ENCODE measurements at regions of chr1 and their contacts with region 1.

Region 1: GRCh38 chr1:94926915-94927404 is at the start of gene CNN3:
- DNase-seq: peak; percentile 94
- H3K4me3 ChIP-seq: peak within 1 kb of the TSS; percentile 66 to 85
- H3K27ac ChIP-seq: peak within 1 kb of the TSS; percentile 97 to 98
- H3K4me1 ChIP-seq: peaks cover 17% of the 10 kb centered on the region
- H3K27me3 ChIP-seq: no peaks in the 10 kb centered on the region
- CTCF ChIP-seq: peak in 2 of 4 experiments; percentile 35 to 43
- POLR2A ChIP-seq: peak; percentile 100
- total RNA-seq, gene CNN3: 136 to 180 TPM

Region 2: DNA sequence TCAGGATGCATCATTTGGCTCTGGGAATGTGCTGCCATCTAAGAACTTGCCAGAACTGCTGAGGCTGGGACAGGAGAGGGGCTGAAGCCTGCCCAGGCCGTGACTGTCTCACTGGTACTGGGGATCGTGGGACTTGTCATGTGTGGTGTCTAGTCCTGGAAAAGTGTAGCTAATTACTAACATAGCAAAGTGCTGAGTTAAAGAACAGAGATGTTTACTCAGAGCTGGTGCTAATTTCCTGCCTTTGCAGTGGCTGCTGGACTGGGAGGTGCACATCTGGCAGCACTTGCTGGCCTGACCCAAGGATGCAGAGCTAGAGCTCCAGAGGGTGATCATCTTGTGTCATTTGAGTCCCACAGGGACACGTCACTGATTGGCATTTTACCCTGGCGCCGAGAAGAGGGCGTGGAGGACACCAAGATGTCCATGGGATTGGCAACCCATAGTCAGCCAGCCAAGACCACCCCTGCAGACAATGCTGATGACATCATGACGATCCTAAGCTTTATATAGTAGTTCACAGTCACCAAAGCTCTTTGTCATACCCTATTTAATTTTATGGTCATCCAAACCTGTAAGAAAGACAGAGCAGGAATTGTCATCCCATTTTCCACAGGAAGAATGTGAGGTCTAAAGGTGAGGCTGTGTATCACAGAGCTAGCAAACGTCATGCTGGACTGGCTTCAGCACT is 216.9 kb before region 1 on chr1:
- intact Hi-C with region 1: no loop called
- DNase-seq: no peak
- H3K4me3 ChIP-seq: no peak overlapping the region
- H3K27ac ChIP-seq: no peak overlapping the region
- H3K4me1 ChIP-seq: peaks cover 14% of the 10 kb centered on the region
- H3K27me3 ChIP-seq: no peaks in the 10 kb centered on the region
- CTCF ChIP-seq: no peak
- POLR2A ChIP-seq: no peak

Region 3: DNA sequence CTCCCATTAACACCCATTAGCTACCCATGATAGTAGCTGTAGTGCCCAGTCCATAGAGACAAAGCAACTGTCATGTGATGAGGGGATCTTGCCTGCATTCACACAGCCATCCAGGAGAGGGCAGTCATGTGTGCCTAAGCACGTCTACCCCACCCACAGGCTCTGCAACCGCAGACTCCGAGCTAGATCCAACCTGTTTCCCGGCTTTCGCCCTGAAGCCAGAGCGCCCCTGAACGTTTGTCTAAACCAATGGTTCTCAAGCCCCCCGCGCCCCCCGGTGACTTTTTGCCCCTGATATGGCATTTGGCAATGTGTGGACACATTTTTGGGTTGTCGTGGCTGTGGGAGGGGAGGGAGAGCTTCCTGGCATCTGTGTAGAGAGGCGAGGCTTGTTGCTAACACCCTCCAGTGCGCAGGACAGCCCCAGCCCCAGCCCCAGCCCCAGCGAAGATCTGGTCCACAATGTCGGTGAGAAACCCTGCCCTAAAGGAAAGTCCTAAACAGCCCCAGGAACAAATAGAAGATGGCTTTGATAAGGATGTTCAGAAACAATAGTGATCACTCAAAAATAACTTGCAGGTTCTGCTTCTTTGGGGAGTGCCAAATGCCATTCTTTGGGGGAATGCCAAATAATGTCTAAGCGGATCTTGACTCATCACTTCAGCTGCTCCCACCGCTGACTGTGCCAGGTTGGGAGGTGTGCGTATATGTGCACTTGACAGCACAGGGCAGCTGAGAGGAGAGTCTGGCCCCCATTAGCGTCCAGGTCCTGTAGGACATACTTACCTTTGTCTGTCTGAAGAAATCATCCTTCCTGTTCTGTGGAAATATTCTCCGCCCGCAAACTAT is 72.3 kb before region 1 on chr1:
- intact Hi-C with region 1: loop called (anchors 1 kb)
- DNase-seq: peak; percentile 91
- H3K4me3 ChIP-seq: peak overlapping the region; percentile 25 to 36
- H3K27ac ChIP-seq: peak overlapping the region; percentile 81 to 88
- H3K4me1 ChIP-seq: no peaks in the 10 kb centered on the region
- H3K27me3 ChIP-seq: no peaks in the 10 kb centered on the region
- CTCF ChIP-seq: peak; percentile 83 to 98 (median 97)
- POLR2A ChIP-seq: no peak

Region 4: GRCh38 chr1:94863919-94864318 is 63.0 kb before region 1 on chr1:
- intact Hi-C with region 1: loop called (anchors 2 kb)
- DNase-seq: peak; percentile 81
- H3K4me3 ChIP-seq: no peak overlapping the region
- H3K27ac ChIP-seq: peak overlapping the region; percentile 87 to 91
- H3K4me1 ChIP-seq: no peaks in the 10 kb centered on the region
- H3K27me3 ChIP-seq: no peaks in the 10 kb centered on the region
- CTCF ChIP-seq: no peak
- POLR2A ChIP-seq: peak; percentile 40

Region 5: GRCh38 chr1:94971491-94971924 is 44.5 kb after region 1 on chr1:
- intact Hi-C with region 1: loop called (anchors 5 kb)
- DNase-seq: no peak
- H3K4me3 ChIP-seq: no peak overlapping the region
- H3K27ac ChIP-seq: peak overlapping the region; percentile 24 to 31
- H3K4me1 ChIP-seq: no peaks in the 10 kb centered on the region
- H3K27me3 ChIP-seq: no peaks in the 10 kb centered on the region
- CTCF ChIP-seq: no peak
- POLR2A ChIP-seq: no peak

Region 6: DNA sequence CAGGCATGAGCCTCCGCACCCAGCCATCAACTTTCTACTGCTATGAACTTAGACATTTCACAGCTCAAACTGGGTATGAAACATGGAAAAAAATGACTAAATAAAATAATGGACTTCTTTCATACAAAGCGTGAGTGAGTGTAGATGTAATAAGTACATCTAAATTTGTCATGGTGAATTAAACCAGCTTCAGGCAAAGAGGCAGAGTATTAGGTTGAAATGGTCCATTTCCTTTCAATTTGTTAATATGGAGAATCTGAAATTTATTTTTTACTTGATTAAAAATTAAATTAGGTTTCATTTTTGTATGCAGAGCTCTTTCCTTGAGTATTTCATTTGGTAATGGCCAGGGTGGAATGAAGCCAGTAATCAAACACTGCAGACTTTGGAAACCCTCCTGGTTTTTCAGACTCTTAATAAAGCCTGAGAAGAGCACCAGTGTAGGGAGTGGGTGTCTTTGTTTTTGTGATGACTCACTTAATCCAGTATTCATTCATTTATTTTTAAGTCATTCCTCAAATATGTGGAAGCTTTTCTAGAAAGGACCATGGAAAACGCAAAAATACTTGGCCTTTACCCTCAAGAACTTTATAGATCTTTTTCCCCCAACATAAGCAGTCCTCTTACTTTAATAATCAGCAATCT is 96.6 kb after region 1 on chr1:
- intact Hi-C with region 1: loop called (anchors 5 kb)
- DNase-seq: no peak
- H3K4me3 ChIP-seq: no peak overlapping the region
- H3K27ac ChIP-seq: peak overlapping the region; percentile 16 to 60
- H3K4me1 ChIP-seq: no peaks in the 10 kb centered on the region
- H3K27me3 ChIP-seq: no peaks in the 10 kb centered on the region
- CTCF ChIP-seq: no peak
- POLR2A ChIP-seq: no peak

Region 7: DNA sequence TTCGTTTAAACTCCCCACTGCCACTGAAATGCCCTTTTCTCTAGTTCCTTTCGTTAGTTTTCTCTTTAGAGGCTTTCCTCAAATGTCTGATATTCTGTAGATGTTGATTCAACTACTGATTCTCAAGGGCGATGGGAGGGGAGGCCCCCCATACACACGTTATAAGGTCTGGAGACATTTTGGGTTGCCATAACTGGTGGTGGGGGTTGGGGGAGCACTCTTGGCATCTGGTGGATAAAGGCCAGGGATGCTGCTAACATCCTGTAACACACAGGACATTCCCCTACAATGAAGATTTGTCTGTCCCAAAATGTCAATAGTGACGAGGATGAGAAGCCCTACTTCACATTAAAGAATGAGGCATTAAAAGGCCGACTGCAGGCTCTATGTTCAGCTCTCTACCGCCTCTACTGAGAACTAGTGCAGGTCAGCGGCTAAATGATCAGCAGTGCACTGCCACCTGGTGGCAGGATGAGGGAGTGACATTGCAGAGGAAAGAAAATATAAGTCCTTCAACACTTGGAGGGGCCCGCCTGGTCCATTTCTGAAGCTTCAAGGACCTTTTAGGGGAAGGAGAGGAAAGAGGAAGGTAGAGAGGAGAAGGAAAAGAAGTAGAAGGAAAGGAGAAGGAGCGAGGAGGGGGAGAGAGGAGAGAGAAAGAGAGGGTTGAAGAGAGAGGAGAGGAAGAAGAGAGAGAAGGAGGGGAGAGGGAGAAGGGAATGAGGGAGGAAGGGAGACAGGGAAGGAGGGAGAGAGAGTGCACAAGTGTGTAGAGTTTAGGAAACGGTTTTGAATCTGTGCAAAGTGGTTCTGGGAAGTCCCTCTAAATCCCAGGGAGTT is 116.4 kb after region 1 on chr1:
- intact Hi-C with region 1: loop called (anchors 2 kb)
- DNase-seq: peak; percentile 89
- H3K4me3 ChIP-seq: no peak overlapping the region
- H3K27ac ChIP-seq: peak overlapping the region; percentile 78 to 84
- H3K4me1 ChIP-seq: no peaks in the 10 kb centered on the region
- H3K27me3 ChIP-seq: no peaks in the 10 kb centered on the region
- CTCF ChIP-seq: peak; percentile 94 to 100 (median 99)
- POLR2A ChIP-seq: no peak